Testis (tissue), 5 donors: ENCODE measurements at regions of chr11 and their contacts with region 1.

Region 1: GRCh38 chr11:34174412-34175041 is 69.1 kb downstream of the NAT10 start:
- DNase-seq: peak; percentile 89
- H3K4me3 ChIP-seq: peak overlapping the region in 1 of 2 donors; percentile 10
- H3K27ac ChIP-seq: no peak overlapping the region
- H3K4me1 ChIP-seq: no peaks in the 10 kb centered on the region
- H3K27me3 ChIP-seq: no peaks in the 10 kb centered on the region
- CTCF ChIP-seq: peak; percentile 77 to 88 (median 87)
- POLR2A ChIP-seq: no peak

Region 2: DNA sequence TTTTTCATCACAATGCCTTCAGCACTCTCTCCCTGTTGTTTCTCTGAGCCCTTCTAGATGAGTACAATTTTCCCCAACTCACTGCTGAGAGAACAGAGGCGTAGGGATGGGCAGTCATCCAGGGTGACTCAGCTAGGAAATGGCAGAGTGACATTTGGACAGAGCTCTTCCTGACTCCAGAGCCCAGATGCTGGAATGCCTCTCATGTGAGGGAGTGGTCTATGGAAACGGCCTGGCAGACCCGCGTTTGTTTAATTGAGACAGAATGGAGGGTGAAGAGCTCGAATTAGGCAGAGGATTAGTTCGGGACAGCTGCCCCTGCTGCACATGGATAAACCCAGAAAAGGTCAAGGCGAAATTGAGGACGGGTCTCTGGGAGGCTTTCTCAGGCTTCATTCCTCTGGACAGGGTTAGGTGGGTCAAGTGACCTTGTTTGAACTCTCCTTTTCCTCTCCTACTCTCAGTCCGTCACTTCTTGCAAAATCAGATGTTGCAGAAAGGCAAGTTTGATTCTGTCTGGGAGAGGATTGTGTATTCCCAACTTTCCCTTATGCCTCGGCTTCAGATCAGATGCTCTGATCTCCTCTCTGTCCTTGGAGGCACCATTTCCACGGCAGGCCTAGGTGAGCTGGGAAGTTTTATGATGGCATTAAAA is 275.0 kb before region 1 on chr11:
- intact Hi-C with region 1: no loop called
- DNase-seq: peak; percentile 80
- H3K4me3 ChIP-seq: no peak overlapping the region
- H3K27ac ChIP-seq: no peak overlapping the region
- H3K4me1 ChIP-seq: peaks cover 4% of the 10 kb centered on the region
- H3K27me3 ChIP-seq: no peaks in the 10 kb centered on the region
- CTCF ChIP-seq: no peak
- POLR2A ChIP-seq: no peak

Region 3: DNA sequence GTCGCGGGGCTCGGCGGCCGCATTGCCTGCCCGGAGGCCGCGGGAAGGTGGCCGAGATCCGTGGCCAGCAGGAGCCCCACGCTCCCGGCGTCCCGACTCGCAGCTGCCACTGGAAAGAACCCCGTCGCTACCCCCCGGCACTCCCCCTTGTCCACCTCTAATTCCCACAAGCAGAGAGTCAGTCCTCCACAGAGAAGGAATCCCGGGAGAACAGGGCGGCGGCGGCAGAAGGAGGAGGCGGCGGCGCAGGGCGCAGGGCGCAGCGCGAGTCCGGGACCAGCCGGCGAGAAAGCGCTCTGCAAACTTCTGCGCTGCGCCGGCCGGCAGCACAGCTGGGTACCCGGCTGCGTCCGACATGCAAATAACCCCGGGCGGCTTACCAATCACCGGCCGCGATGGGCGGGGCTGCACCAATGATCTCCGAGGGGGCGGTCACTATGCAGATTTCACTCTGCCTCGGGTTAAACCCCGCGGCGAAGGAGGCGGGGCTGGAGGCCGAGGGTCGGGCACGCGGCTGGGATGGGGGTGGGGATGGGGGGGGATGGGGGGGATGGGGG is 183.3 kb after region 1 on chr11 and contains the start of gene ABTB2:
- intact Hi-C with region 1: loop called (anchors 5 kb)
- DNase-seq: peak; percentile 99
- H3K4me3 ChIP-seq: peak within 1 kb of the TSS; percentile 54 to 72
- H3K27ac ChIP-seq: peak within 1 kb of the TSS; percentile 11 to 68
- H3K4me1 ChIP-seq: peaks cover 14% of the 10 kb centered on the region
- H3K27me3 ChIP-seq: no peaks in the 10 kb centered on the region
- CTCF ChIP-seq: peak in 1 of 3 experiments; percentile 26
- POLR2A ChIP-seq: peak; percentile 79
- total RNA-seq, gene ABTB2: 5.8 to 12.1 TPM